ENCODE measurements at regions of chr1 and their contacts with region 1.

Region 1: DNA sequence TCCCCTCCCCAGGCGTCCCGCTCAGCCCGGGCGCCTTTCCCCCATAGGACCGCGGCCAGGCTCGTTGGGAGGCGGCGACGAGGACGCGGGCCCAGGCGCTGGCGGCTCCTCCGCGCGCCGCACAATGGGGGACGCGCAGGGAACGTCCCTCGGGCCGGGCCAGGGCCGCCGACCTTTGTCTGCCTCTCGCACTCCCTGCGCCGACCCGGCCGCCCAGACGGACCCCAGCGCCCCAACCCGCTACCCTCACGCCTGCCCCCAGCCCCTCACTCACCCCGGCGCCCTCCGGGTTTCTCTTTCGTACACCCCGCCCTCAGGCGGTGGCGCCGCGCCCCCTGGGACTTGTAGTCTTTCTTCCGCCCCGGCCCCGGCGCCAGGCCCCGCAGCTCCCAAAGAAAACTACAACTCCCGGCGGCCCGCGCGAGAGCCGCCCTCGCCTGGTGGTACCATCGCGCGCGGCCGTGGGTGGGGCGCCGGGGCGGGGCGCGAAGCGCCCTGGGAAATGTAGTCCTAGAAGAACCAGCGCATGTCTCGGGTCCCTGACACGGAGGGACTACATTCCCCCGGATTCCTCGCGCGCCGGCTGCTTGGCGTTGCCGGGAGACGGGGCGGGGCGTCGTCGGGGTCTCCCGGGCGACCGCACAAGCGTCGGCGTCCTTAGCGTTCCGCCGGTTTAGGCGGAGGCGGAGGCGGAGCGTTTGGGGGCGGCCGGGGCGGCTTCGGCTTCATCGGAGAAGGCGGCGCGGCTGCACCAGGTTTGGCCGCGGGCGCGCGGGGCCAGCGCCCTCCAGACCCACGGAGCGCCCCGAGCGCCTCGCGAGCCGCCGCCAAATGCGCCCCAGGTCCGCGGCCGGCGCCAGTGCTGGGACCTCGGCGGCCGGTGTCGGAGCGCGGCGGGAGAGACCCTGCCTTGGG is at the start of gene C1orf159:
- DNase-seq: peak; percentile 99
- H3K4me3 ChIP-seq: peak within 1 kb of the TSS; percentile 93 to 100 (median 98)
- H3K27ac ChIP-seq: peak within 1 kb of the TSS; percentile 86 to 94 (median 88)
- H3K4me1 ChIP-seq: peaks cover 4 to 15% (median 10%) of the 10 kb centered on the region in 4 donors
- H3K27me3 ChIP-seq: peaks cover 15% of the 10 kb centered on the region
- CTCF ChIP-seq: peak in 2 of 5 experiments; percentile 8 to 29
- EP300 ChIP-seq: no peak
- POLR2A ChIP-seq: peak; percentile 38
- total RNA-seq, gene C1orf159: 23.6 to 108 (median 47.3) TPM

Region 2: GRCh38 chr1:1033009-1033587 is 82.9 kb before region 1 on chr1:
- in situ Hi-C with region 1: loop called in 1 of 4 experiments (anchors 10 kb)
- intact Hi-C with region 1: no loop called
- DNase-seq: peak; percentile 92
- H3K4me3 ChIP-seq: peak overlapping the region; percentile 4 to 49 (median 38)
- H3K27ac ChIP-seq: peak overlapping the region in 1 of 4 donors; percentile 39
- H3K4me1 ChIP-seq: peaks cover 9 to 22% (median 22%) of the 10 kb centered on the region in 4 donors
- H3K27me3 ChIP-seq: peaks cover 34% of the 10 kb centered on the region
- CTCF ChIP-seq: peak; percentile 65 to 84 (median 72)
- EP300 ChIP-seq: no peak
- POLR2A ChIP-seq: no peak

Region 3: DNA sequence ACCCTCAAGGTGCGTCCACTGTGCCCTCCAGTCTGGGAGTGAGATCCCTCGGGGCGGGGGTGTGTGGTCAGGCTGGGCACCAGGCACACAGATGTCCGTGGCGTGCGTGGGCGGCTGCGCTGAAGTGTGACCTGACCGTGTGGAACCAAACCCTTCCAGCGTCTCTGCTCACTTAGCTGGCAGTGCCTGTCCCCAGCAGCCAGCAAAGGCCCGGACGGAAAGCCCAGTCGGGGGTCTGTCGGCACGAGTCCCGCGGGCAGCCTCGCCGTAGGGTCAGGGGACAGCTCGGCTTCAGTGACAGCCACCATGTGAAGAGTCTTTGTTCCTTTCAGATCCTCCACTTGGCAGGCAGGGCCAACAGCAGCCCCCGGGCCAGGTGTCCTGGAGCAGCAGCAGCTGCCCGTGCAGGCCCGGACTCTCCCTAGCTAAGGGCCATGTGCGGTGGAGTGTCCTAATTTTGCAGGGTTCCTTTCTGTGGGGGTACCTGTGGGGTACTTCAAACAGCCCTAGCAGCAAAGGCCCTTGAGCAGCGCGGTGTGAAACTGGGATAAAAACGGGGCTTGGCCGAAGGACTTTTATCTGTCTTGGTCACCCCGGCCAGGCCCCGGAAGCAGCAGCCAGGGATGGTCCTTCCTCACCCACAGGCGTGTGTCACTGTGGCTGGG is 69.2 kb after region 1 on chr1:
- in situ Hi-C with region 1: loop called in 1 of 4 experiments (anchors 5 kb)
- intact Hi-C with region 1: no loop called
- DNase-seq: no peak
- H3K4me3 ChIP-seq: no peak overlapping the region
- H3K27ac ChIP-seq: no peak overlapping the region
- H3K4me1 ChIP-seq: no peaks in the 10 kb centered on the region
- H3K27me3 ChIP-seq: no peaks in the 10 kb centered on the region
- CTCF ChIP-seq: no peak
- EP300 ChIP-seq: no peak
- POLR2A ChIP-seq: no peak

Region 4: GRCh38 chr1:1264868-1265272 is 148.8 kb after region 1 on chr1:
- in situ Hi-C with region 1: loop called in 3 of 4 experiments (anchors 10 to 25 kb)
- intact Hi-C with region 1: no loop called
- DNase-seq: no peak
- H3K4me3 ChIP-seq: no peak overlapping the region
- H3K27ac ChIP-seq: peak overlapping the region in 1 of 4 donors; percentile 48
- H3K4me1 ChIP-seq: peaks cover 0 to under 1% (median 0%) of the 10 kb centered on the region in 4 donors
- H3K27me3 ChIP-seq: no peaks in the 10 kb centered on the region
- CTCF ChIP-seq: peak in 1 of 5 experiments; percentile 6
- EP300 ChIP-seq: no peak
- POLR2A ChIP-seq: no peak

Region 5: GRCh38 chr1:1273512-1274298 is 157.7 kb after region 1 on chr1 and contains the start of gene UBE2J2:
- in situ Hi-C with region 1: loop called in 3 of 4 experiments (anchors 10 to 25 kb)
- intact Hi-C with region 1: no loop called
- DNase-seq: peak; percentile 96
- H3K4me3 ChIP-seq: peak within 1 kb of the TSS; percentile 51 to 98 (median 80)
- H3K27ac ChIP-seq: peak within 1 kb of the TSS; percentile 83 to 90 (median 88)
- H3K4me1 ChIP-seq: peaks cover 20 to 37% (median 35%) of the 10 kb centered on the region in 4 donors
- H3K27me3 ChIP-seq: no peaks in the 10 kb centered on the region
- CTCF ChIP-seq: no peak
- EP300 ChIP-seq: no peak
- POLR2A ChIP-seq: peak; percentile 48
- total RNA-seq, gene UBE2J2: 49.6 to 110 (median 59.1) TPM